ENCODE measurements at regions of chr14 and their contacts with region 1.

Region 1: DNA sequence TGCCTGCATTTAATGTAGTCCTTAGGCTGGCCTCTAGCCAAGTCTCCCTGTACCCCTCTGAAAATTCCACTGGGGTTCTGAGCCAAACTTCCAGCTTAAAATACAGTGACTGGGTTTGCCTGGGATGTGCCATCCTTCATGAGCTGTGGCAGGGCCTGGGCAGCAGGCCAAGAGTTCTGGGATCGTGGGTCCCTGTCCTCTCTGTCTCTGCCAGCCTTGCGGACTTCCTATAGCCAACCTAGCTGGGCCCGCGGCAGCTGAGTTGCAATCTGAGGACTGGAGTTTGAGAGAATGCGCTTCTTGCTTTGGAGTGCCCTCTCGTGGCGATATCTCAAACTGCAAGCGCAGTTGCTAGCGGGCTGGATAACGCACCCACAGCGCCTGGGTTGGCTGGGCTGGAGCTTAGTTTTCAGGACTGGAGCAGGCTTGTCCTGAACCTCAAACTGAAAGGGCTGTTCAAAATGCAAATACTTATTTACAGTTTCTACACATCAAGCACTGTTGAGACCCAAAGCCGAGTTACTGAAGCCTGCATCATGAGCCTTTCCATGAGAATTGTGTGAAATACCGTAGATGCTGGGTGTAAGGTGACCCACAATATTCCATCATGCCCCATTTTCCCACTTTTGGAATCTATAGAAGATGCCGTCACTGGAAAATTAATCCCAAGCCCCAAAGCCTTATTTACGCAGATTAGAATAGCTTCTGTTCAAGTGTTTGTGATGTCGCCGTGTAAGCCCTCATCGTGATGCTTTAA is 7.3 kb upstream of the IFI27L2 start:
- DNase-seq: peak; percentile 94 to 95
- H3K4me3 ChIP-seq: no peak overlapping the region
- H3K27ac ChIP-seq: no peak overlapping the region
- H3K4me1 ChIP-seq: peaks cover 0 to 6% (median 3%) of the 10 kb centered on the region in 4 donors
- H3K27me3 ChIP-seq: peaks cover 0 to 13% (median 0%) of the 10 kb centered on the region in 3 donors
- CTCF ChIP-seq: peak in 6 of 7 experiments; percentile 19 to 99 (median 96)
- EP300 ChIP-seq: no peak
- POLR2A ChIP-seq: no peak

Region 2: GRCh38 chr14:94031161-94031882 is 105.4 kb before region 1 on chr14:
- intact Hi-C with region 1: loop called (anchors 5 kb)
- DNase-seq: no peak
- H3K4me3 ChIP-seq: no peak overlapping the region
- H3K27ac ChIP-seq: no peak overlapping the region
- H3K4me1 ChIP-seq: peaks cover 11 to 30% (median 17%) of the 10 kb centered on the region in 4 donors
- H3K27me3 ChIP-seq: no peaks in the 10 kb centered on the region
- CTCF ChIP-seq: no peak
- EP300 ChIP-seq: no peak
- POLR2A ChIP-seq: no peak